Endothelial cell of umbilical vein (primary cell): ENCODE measurements at regions of chr5 and their contacts with region 1.

Region 1: GRCh38 chr5:81552852-81553566 is 159.1 kb upstream of the ACOT12 start:
- DNase-seq: peak; percentile 85
- H3K4me3 ChIP-seq: peak overlapping the region in 1 of 3 experiments; percentile 18
- H3K27ac ChIP-seq: peak overlapping the region; percentile 79
- H3K4me1 ChIP-seq: peaks cover 28% of the 10 kb centered on the region
- H3K27me3 ChIP-seq: no peaks in the 10 kb centered on the region
- CTCF ChIP-seq: no peak
- POLR2A ChIP-seq: no peak

Region 2: GRCh38 chr5:81506900-81507588 is 46.0 kb before region 1 on chr5:
- CTCF ChIA-PET with region 1: interaction called, 5 read pairs
- POLR2A ChIA-PET with region 1: no interaction called
- dilution Hi-C with region 1: no loop called
- intact Hi-C with region 1: loop called (anchors 2 kb)
- DNase-seq: peak; percentile 94
- H3K4me3 ChIP-seq: no peak overlapping the region
- H3K27ac ChIP-seq: no peak overlapping the region
- H3K4me1 ChIP-seq: peaks cover 14% of the 10 kb centered on the region
- H3K27me3 ChIP-seq: no peaks in the 10 kb centered on the region
- CTCF ChIP-seq: peak; percentile 78
- POLR2A ChIP-seq: no peak

Region 3: GRCh38 chr5:81579262-81579924 is 26.4 kb after region 1 on chr5:
- CTCF ChIA-PET with region 1: no interaction called
- POLR2A ChIA-PET with region 1: no interaction called
- dilution Hi-C with region 1: no loop called
- intact Hi-C with region 1: loop called (anchors 1 kb)
- DNase-seq: peak; percentile 57
- H3K4me3 ChIP-seq: no peak overlapping the region
- H3K27ac ChIP-seq: no peak overlapping the region
- H3K4me1 ChIP-seq: peaks cover 10% of the 10 kb centered on the region
- H3K27me3 ChIP-seq: no peaks in the 10 kb centered on the region
- CTCF ChIP-seq: no peak
- POLR2A ChIP-seq: no peak

Region 4: GRCh38 chr5:81626524-81626923 is 73.5 kb after region 1 on chr5:
- CTCF ChIA-PET with region 1: interaction called, 6 read pairs
- POLR2A ChIA-PET with region 1: no interaction called
- dilution Hi-C with region 1: no loop called
- intact Hi-C with region 1: loop called (anchors 2 kb)
- DNase-seq: peak; percentile 86
- H3K4me3 ChIP-seq: no peak overlapping the region
- H3K27ac ChIP-seq: peak overlapping the region; percentile 38
- H3K4me1 ChIP-seq: peaks cover 19% of the 10 kb centered on the region
- H3K27me3 ChIP-seq: no peaks in the 10 kb centered on the region
- CTCF ChIP-seq: no peak
- POLR2A ChIP-seq: no peak

Region 5: DNA sequence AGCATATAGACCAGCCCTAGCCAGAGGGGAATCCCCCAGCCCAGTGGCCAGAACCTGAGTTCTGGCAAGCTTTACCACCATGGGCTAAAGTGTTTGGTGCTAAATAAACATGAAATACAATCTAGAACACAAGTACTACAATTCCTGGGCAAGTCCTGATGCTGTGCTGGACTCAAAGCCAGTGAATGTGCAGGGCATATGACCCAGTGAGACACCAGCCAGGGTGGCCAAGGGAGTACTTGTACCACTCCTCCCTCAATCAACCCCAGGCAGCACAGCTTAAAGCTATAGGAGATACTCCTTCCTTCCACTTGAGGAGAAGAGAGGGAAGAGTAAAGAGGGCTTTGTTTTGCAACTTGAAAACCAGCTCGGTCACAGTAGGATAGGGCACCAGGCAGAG is 134.3 kb after region 1 on chr5:
- CTCF ChIA-PET with region 1: no interaction called
- POLR2A ChIA-PET with region 1: no interaction called
- dilution Hi-C with region 1: no loop called
- intact Hi-C with region 1: no loop called
- DNase-seq: no peak
- H3K4me3 ChIP-seq: no peak overlapping the region
- H3K27ac ChIP-seq: no peak overlapping the region
- H3K4me1 ChIP-seq: no peaks in the 10 kb centered on the region
- H3K27me3 ChIP-seq: no peaks in the 10 kb centered on the region
- CTCF ChIP-seq: no peak
- POLR2A ChIP-seq: no peak

Region 6: GRCh38 chr5:81768667-81769452 is 215.9 kb after region 1 on chr5:
- CTCF ChIA-PET with region 1: no interaction called
- POLR2A ChIA-PET with region 1: no interaction called
- dilution Hi-C with region 1: no loop called
- intact Hi-C with region 1: loop called (anchors 1 kb)
- DNase-seq: peak; percentile 94
- H3K4me3 ChIP-seq: no peak overlapping the region
- H3K27ac ChIP-seq: peak overlapping the region; percentile 67
- H3K4me1 ChIP-seq: peaks cover 10% of the 10 kb centered on the region
- H3K27me3 ChIP-seq: no peaks in the 10 kb centered on the region
- CTCF ChIP-seq: no peak
- POLR2A ChIP-seq: no peak

Region 7: GRCh38 chr5:81851481-81852178 is 298.6 kb after region 1 on chr5:
- CTCF ChIA-PET with region 1: interaction called, 3 read pairs
- POLR2A ChIA-PET with region 1: no interaction called
- dilution Hi-C with region 1: no loop called
- intact Hi-C with region 1: loop called (anchors 1 kb)
- DNase-seq: peak; percentile 94
- H3K4me3 ChIP-seq: peak overlapping the region in 2 of 3 experiments; percentile 40 to 54
- H3K27ac ChIP-seq: peak overlapping the region; percentile 65
- H3K4me1 ChIP-seq: peaks cover 10% of the 10 kb centered on the region
- H3K27me3 ChIP-seq: no peaks in the 10 kb centered on the region
- CTCF ChIP-seq: no peak
- POLR2A ChIP-seq: peak; percentile 88

Region 8: GRCh38 chr5:81909677-81910076 is 356.7 kb after region 1 on chr5:
- CTCF ChIA-PET with region 1: no interaction called
- POLR2A ChIA-PET with region 1: no interaction called
- dilution Hi-C with region 1: no loop called
- intact Hi-C with region 1: no loop called
- DNase-seq: no peak
- H3K4me3 ChIP-seq: no peak overlapping the region
- H3K27ac ChIP-seq: no peak overlapping the region
- H3K4me1 ChIP-seq: no peaks in the 10 kb centered on the region
- H3K27me3 ChIP-seq: peaks cover 0 to 3% of the 10 kb centered on the region in 2 experiments
- CTCF ChIP-seq: no peak
- POLR2A ChIP-seq: no peak

Region 9: DNA sequence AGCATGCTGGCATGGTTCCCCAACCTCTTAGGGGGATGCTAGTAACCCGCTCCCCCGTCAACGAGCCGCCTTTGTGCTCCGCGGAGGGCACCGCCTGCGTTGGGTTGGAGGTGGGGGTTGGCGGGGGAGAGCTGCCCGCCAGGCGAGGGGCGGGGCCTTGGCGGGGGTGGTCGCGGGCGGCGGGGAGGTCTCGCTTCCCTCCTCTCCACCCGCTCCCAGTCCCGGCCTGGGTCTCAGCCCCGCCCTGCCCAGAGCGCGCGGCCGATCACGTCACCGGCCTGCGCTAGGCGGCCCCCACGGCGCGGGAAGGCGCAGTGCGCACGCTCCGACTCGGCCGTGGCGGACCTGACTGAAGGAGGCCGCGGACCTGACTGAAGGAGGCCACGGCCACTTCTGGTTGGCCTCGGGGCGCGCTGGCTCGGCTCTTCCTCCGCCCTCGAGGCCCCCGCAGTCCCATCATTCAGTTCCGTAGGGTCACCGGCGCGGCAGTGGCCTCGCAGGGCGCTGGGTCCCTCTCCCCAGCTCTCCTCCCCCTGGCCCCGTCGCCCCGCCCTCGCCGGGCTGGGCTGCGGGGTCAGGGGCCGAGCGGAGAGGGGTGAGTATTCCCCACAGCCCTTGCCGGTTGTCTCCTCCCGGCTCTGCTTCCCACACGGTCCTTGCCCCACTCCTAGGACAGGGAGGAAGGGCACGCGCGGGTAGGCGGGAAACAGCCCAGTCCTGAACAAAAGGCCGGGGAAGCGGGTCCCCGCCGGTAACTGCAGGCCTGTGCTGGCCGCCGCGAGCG is 418.9 kb after region 1 on chr5 and contains the start of gene ATG10:
- CTCF ChIA-PET with region 1: no interaction called
- POLR2A ChIA-PET with region 1: no interaction called
- dilution Hi-C with region 1: no loop called
- intact Hi-C with region 1: loop called (anchors 2 kb)
- DNase-seq: peak; percentile 96
- H3K4me3 ChIP-seq: peak within 1 kb of the TSS; percentile 64 to 89 (median 71)
- H3K27ac ChIP-seq: peak within 1 kb of the TSS; percentile 71
- H3K4me1 ChIP-seq: no peaks in the 10 kb centered on the region
- H3K27me3 ChIP-seq: no peaks in the 10 kb centered on the region
- CTCF ChIP-seq: no peak
- POLR2A ChIP-seq: peak; percentile 89
- total RNA-seq, gene ATG10: 3.9 and 5.9 TPM in 2 replicates